MCF 10A (cell line): ENCODE measurements at regions of chr2 and their contacts with region 1.

Region 1: GRCh38 chr2:118386641-118387302 is 298.5 kb downstream of the INSIG2 start:
- DNase-seq: peak; percentile 70
- H3K4me3 Mint-ChIP-seq: no peak overlapping the region
- H3K27ac Mint-ChIP-seq: no peak overlapping the region
- H3K4me1 Mint-ChIP-seq: peaks cover 21% of the 10 kb centered on the region
- H3K27me3 Mint-ChIP-seq: no peaks in the 10 kb centered on the region
- CTCF ChIP-seq: no peak

Region 2: GRCh38 chr2:118431165-118431517 is 44.4 kb after region 1 on chr2:
- CTCF ChIA-PET with region 1: interaction called, 9 read pairs
- POLR2A ChIA-PET with region 1: interaction called, 3 read pairs
- intact Hi-C with region 1: loop called (anchors 1 kb)
- DNase-seq: peak; percentile 66
- H3K4me3 Mint-ChIP-seq: peak overlapping the region; percentile 37
- H3K27ac Mint-ChIP-seq: peak overlapping the region; percentile 85
- H3K4me1 Mint-ChIP-seq: peaks cover 26% of the 10 kb centered on the region
- H3K27me3 Mint-ChIP-seq: no peaks in the 10 kb centered on the region
- CTCF ChIP-seq: peak; percentile 35

Region 3: DNA sequence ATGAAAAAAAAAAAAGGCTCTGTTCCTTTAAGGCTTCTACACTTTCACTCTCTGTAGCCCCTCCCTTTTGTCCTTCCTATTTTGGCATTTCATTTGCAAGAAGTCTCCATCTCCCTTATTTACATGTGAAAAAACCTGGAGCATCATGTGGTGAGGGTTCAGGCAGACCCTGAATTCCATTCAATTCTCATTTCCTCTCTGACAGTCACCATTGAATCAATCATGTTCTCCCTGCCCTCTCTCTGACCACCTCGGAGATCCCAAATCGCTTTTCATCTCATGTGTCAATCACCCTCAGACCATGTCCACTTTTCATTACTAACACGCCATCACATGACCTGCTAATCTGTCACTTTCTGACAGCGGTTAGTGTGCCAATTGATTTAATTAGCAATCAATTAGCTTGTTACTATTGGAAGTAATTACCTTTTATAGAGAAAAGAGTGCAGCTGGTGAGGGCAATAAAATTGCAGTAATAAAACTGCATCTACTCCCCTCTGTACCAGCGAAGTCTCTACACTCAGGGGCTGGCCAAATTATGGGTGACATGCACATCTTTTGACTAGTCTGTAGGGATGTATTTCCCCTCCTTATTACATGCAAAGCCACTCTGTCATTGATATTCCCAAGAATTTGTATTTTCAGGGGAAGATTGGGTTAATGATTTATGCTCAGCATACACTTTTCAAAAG is 143.3 kb after region 1 on chr2:
- CTCF ChIA-PET with region 1: no interaction called
- POLR2A ChIA-PET with region 1: no interaction called
- intact Hi-C with region 1: no loop called
- DNase-seq: no peak
- H3K4me3 Mint-ChIP-seq: no peak overlapping the region
- H3K27ac Mint-ChIP-seq: no peak overlapping the region
- H3K4me1 Mint-ChIP-seq: no peaks in the 10 kb centered on the region
- H3K27me3 Mint-ChIP-seq: no peaks in the 10 kb centered on the region
- CTCF ChIP-seq: no peak

Region 4: GRCh38 chr2:118738524-118739308 is 351.9 kb after region 1 on chr2:
- CTCF ChIA-PET with region 1: no interaction called
- POLR2A ChIA-PET with region 1: no interaction called
- intact Hi-C with region 1: loop called (anchors 10 kb)
- DNase-seq: peak; percentile 97
- H3K4me3 Mint-ChIP-seq: no peak overlapping the region
- H3K27ac Mint-ChIP-seq: peak overlapping the region; percentile 39
- H3K4me1 Mint-ChIP-seq: peaks cover 16% of the 10 kb centered on the region
- H3K27me3 Mint-ChIP-seq: no peaks in the 10 kb centered on the region
- CTCF ChIP-seq: no peak